ENCODE measurements at regions of chr11 and their contacts with region 1.

Region 1: DNA sequence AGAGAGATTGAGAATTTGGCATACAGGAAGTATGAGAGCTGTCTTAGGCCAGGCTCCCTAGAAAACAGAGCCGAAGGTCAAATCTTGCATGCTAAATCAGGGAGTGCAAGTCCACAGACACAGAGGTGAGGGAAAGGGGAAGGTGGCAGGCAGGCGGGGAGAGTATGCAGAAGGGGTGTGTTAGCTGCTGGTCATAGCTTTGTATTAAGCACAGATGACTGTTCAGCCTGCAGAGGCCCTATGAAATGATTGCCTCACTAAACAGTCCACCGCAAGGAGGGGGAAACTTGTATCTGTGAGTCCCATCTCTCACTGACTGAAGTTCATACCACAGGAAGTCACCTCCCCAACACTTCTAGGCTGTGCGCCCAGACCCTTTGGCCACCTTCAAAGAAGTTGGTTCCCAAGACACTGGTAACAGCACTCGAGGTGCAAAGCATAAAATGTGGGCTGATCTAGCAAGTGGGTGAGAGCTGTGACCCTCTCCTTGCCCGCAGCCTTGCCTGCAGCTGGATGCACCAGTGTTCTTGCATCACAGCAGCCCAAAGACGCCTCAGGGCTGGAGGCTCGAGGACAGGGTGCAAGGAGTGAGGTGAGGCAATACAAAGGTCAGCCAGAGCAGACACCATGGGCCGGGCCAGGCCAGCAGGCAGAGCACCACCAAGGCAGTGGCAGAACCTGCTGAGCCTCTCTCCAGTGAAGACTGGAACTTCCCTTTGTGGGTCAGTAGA is 115.3 kb upstream of the TBCEL start:
- DNase-seq: peak; percentile 42 to 66
- ATAC-seq: peak; percentile 82 to 87 (median 86)
- H3K4me3 ChIP-seq: no peak overlapping the region
- H3K4me3 Mint-ChIP-seq: peak overlapping the region; percentile 62
- H3K27ac ChIP-seq: peak overlapping the region; percentile 88
- H3K27ac Mint-ChIP-seq: peak overlapping the region; percentile 84 to 90
- H3K4me1 ChIP-seq: peaks cover 59% of the 10 kb centered on the region
- H3K4me1 Mint-ChIP-seq: peaks cover 74% of the 10 kb centered on the region in 2 donors
- H3K27me3 ChIP-seq: no peaks in the 10 kb centered on the region
- H3K27me3 Mint-ChIP-seq: no peaks in the 10 kb centered on the region
- CTCF ChIP-seq: no peak

Region 2: GRCh38 chr11:120517390-120517761 is 391.2 kb before region 1 on chr11:
- intact Hi-C with region 1: no loop called
- DNase-seq: no peak
- ATAC-seq: no peak
- H3K4me3 ChIP-seq: no peak overlapping the region
- H3K4me3 Mint-ChIP-seq: no peak overlapping the region
- H3K27ac ChIP-seq: no peak overlapping the region
- H3K27ac Mint-ChIP-seq: peak overlapping the region in 1 of 2 donors; percentile 17
- H3K4me1 ChIP-seq: no peaks in the 10 kb centered on the region
- H3K4me1 Mint-ChIP-seq: peaks cover 0 to 39% of the 10 kb centered on the region in 2 donors
- H3K27me3 ChIP-seq: no peaks in the 10 kb centered on the region
- H3K27me3 Mint-ChIP-seq: peaks cover 3 to 24% of the 10 kb centered on the region in 2 donors
- CTCF ChIP-seq: no peak

Region 3: GRCh38 chr11:120792306-120792705 is 116.3 kb before region 1 on chr11:
- intact Hi-C with region 1: loop called (anchors 1 kb)
- DNase-seq: no peak
- ATAC-seq: no peak
- H3K4me3 ChIP-seq: no peak overlapping the region
- H3K4me3 Mint-ChIP-seq: no peak overlapping the region
- H3K27ac ChIP-seq: no peak overlapping the region
- H3K27ac Mint-ChIP-seq: no peak overlapping the region
- H3K4me1 ChIP-seq: peaks cover 36% of the 10 kb centered on the region
- H3K4me1 Mint-ChIP-seq: peaks cover 0 to 10% of the 10 kb centered on the region in 2 donors
- H3K27me3 ChIP-seq: peaks cover 12% of the 10 kb centered on the region
- H3K27me3 Mint-ChIP-seq: no peaks in the 10 kb centered on the region
- CTCF ChIP-seq: no peak

Region 4: GRCh38 chr11:120858740-120859139 is 49.9 kb before region 1 on chr11:
- intact Hi-C with region 1: loop called (anchors 2 kb)
- DNase-seq: no peak
- ATAC-seq: no peak
- H3K4me3 ChIP-seq: no peak overlapping the region
- H3K4me3 Mint-ChIP-seq: no peak overlapping the region
- H3K27ac ChIP-seq: no peak overlapping the region
- H3K27ac Mint-ChIP-seq: peak overlapping the region in 1 of 2 donors; percentile 80
- H3K4me1 ChIP-seq: peaks cover 30% of the 10 kb centered on the region
- H3K4me1 Mint-ChIP-seq: peaks cover 26 to 58% of the 10 kb centered on the region in 2 donors
- H3K27me3 ChIP-seq: no peaks in the 10 kb centered on the region
- H3K27me3 Mint-ChIP-seq: no peaks in the 10 kb centered on the region
- CTCF ChIP-seq: no peak

Region 5: DNA sequence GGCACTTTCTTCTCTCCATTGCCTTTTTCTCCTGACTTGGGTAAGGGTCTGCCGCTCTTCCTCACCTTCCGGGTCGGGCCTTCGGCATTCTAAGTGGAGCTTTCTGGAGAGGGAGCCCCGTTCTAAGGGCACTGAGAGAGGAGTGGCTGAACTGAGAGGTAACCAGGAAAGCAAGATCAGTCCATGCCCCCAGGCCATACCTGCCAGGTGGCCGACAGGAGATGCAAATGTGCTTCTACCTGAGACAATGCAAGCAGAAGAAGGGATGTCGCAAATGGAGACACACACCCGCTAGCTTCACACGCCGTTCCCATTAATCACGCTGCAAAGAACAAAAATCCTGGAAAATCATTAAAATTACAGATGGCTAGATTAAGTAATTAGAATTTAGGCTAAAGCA is 41.1 kb before region 1 on chr11:
- intact Hi-C with region 1: loop called (anchors 2 kb)
- DNase-seq: no peak
- ATAC-seq: no peak
- H3K4me3 ChIP-seq: no peak overlapping the region
- H3K4me3 Mint-ChIP-seq: peak overlapping the region; percentile 84
- H3K27ac ChIP-seq: peak overlapping the region; percentile 79
- H3K27ac Mint-ChIP-seq: peak overlapping the region; percentile 54 to 96
- H3K4me1 ChIP-seq: peaks cover 50% of the 10 kb centered on the region
- H3K4me1 Mint-ChIP-seq: peaks cover 65 to 90% of the 10 kb centered on the region in 2 donors
- H3K27me3 ChIP-seq: no peaks in the 10 kb centered on the region
- H3K27me3 Mint-ChIP-seq: no peaks in the 10 kb centered on the region
- CTCF ChIP-seq: no peak

Region 6: GRCh38 chr11:120929664-120930154 is 21.1 kb after region 1 on chr11:
- intact Hi-C with region 1: loop called (anchors 1 kb)
- DNase-seq: peak; percentile 64 to 65
- ATAC-seq: peak; percentile 82 to 92 (median 90)
- H3K4me3 ChIP-seq: no peak overlapping the region
- H3K4me3 Mint-ChIP-seq: no peak overlapping the region
- H3K27ac ChIP-seq: peak overlapping the region; percentile 27
- H3K27ac Mint-ChIP-seq: peak overlapping the region in 1 of 2 donors; percentile 80
- H3K4me1 ChIP-seq: peaks cover 11% of the 10 kb centered on the region
- H3K4me1 Mint-ChIP-seq: peaks cover 35 to 55% of the 10 kb centered on the region in 2 donors
- H3K27me3 ChIP-seq: no peaks in the 10 kb centered on the region
- H3K27me3 Mint-ChIP-seq: no peaks in the 10 kb centered on the region
- CTCF ChIP-seq: peak; percentile 70

Region 7: GRCh38 chr11:121132196-121132976 is 223.8 kb after region 1 on chr11:
- intact Hi-C with region 1: no loop called
- DNase-seq: no peak
- ATAC-seq: no peak
- H3K4me3 ChIP-seq: no peak overlapping the region
- H3K4me3 Mint-ChIP-seq: no peak overlapping the region
- H3K27ac ChIP-seq: no peak overlapping the region
- H3K27ac Mint-ChIP-seq: no peak overlapping the region
- H3K4me1 ChIP-seq: no peaks in the 10 kb centered on the region
- H3K4me1 Mint-ChIP-seq: no peaks in the 10 kb centered on the region
- H3K27me3 ChIP-seq: no peaks in the 10 kb centered on the region
- H3K27me3 Mint-ChIP-seq: peaks cover 2 to 10% of the 10 kb centered on the region in 2 donors
- CTCF ChIP-seq: no peak